Activated CD4-positive, alpha-beta T cell treated with anti-CD3 and anti-CD28 coated beads for 36 hours (primary cell): ENCODE measurements at regions of chr22 and their contacts with region 1.

Region 1: GRCh38 chr22:16774911-16775500 is 50.2 kb downstream of the XKR3 start:
- DNase-seq: no peak
- ATAC-seq: no peak
- H3K4me3 Mint-ChIP-seq: no peak overlapping the region
- H3K27ac Mint-ChIP-seq: no peak overlapping the region
- H3K4me1 Mint-ChIP-seq: peaks cover 4% of the 10 kb centered on the region
- H3K27me3 Mint-ChIP-seq: no peaks in the 10 kb centered on the region

Region 2: DNA sequence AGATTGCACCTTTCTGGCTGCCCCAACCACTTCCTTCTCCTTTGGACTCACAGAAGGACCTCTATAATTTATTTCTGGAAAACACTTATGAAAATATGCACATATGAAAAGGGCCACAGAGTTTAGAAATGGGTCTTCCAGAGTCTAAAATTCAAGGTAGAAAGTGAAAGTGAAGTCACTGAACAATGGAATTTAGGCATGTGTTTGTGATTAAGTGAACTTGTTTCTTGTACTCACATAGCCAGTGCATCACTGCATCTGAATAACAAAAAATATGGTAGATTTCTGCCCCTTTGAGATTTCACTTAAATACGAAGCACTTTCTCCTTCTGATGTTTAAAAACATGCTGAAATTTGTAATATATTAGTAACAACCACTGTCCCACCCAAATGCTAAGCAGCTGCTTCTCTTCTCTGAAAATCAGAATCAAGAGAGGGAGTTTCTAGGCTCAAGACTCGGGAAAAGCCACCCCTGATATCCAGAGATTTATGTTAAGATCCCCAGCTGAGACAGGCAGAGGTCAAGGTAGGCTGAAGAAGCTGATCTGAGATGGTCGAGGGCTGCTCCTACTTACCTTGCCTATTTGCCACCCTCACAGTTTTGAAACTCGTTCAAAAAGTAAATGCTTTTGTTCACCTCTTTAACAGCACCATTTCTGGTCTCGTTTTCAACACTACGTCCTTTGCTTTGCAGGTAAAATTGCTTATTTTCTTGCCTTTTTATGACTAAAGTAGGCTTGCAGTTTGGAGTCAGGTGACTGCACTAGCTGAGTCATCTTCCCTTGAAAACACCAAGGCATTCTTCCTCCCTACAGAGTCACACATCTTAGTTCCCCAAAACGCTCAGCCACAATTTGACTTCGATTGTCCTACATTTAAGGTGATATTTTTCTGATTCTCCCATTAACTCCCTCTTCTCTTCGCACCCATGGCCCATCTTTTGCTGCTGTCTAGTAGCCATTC is 50.0 kb after region 1 on chr22 and contains the start of gene XKR3:
- CTCF ChIA-PET with region 1: no interaction called
- POLR2A ChIA-PET with region 1: no interaction called
- intact Hi-C with region 1: loop called in 1 of 2 experiments (anchors 5 kb)
- DNase-seq: peak; percentile 28
- ATAC-seq: peak; percentile 85
- H3K4me3 Mint-ChIP-seq: peak within 1 kb of the TSS; percentile 16
- H3K27ac Mint-ChIP-seq: peak within 1 kb of the TSS; percentile 72
- H3K4me1 Mint-ChIP-seq: peaks cover 22% of the 10 kb centered on the region
- H3K27me3 Mint-ChIP-seq: no peaks in the 10 kb centered on the region
- total RNA-seq, gene XKR3: not detected

Region 3: DNA sequence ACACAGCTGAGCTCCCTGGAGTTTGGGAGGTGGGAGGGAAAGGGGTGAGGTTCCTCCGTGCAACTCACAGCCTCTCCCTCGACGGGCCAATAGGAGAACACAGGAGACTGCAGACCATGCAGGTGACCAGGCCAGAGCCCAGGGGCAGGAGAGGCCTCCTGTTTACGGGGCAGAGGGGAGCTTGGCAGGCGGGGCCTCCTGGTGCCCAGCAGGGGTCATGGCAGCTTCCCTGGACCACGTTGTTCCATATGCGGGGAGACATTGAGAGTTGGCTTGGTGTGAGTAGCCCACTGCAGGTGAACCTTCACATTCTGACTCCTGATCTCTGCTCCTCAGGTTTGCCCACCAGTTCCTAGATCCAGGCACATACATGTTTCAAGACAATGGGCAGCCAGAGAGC is 69.5 kb after region 1 on chr22:
- CTCF ChIA-PET with region 1: no interaction called
- POLR2A ChIA-PET with region 1: no interaction called
- intact Hi-C with region 1: no loop called
- DNase-seq: no peak
- ATAC-seq: no peak
- H3K4me3 Mint-ChIP-seq: no peak overlapping the region
- H3K27ac Mint-ChIP-seq: no peak overlapping the region
- H3K4me1 Mint-ChIP-seq: no peaks in the 10 kb centered on the region
- H3K27me3 Mint-ChIP-seq: peaks cover 4% of the 10 kb centered on the region